Activated CD8-positive, alpha-beta T cell treated with anti-CD3 and anti-CD28 coated beads, Interleukin-2, amount 10 ng/mL, durations not matched to agents 7 days and 5 days (primary cell): ENCODE measurements at regions of chr5 and their contacts with region 1.

Region 1: DNA sequence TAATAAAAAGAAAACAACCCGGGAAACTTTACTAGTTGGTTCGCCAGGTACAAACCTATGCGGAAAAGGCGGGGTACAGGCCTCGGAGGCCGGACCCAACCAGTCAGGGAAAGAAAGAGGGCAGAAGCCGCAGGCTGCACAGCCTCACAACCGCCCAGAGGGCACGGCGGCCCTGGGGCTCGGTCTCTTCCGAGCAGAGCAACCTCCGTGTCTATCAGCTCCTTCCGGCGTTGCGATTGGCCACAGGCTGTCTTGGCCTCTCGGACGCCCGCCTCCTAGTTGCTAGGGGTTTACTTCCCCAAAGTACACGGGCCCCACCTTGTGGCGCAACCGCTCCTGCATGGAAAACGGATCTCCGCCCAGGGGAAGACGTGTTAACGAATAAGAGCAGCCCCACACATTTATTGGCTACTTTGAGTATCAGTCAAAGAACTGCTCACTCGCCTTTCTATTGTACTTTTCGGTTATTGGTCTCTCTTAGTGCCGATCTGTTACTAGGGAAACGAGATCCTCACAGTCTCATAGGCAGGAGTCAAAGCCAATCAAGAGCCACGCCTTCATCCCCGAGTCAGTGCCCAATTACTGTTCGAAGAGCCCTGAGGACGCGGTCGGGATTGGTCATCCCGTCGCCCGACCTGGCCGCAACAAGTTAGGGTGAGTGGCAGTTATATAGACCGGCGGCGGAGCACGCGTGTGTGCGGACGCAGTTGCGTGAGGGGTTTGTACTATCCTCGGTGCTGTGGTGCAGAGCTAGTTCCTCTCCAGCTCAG is at the start of gene G3BP1:
- DNase-seq: peak; percentile 100
- ATAC-seq: peak; percentile 84
- H3K4me3 Mint-ChIP-seq: peak within 1 kb of the TSS; percentile 87
- H3K27ac Mint-ChIP-seq: peak within 1 kb of the TSS; percentile 81
- H3K4me1 Mint-ChIP-seq: peaks cover 33% of the 10 kb centered on the region
- H3K27me3 Mint-ChIP-seq: no peaks in the 10 kb centered on the region
- total RNA-seq, gene G3BP1: 193 to 213 TPM

Region 2: DNA sequence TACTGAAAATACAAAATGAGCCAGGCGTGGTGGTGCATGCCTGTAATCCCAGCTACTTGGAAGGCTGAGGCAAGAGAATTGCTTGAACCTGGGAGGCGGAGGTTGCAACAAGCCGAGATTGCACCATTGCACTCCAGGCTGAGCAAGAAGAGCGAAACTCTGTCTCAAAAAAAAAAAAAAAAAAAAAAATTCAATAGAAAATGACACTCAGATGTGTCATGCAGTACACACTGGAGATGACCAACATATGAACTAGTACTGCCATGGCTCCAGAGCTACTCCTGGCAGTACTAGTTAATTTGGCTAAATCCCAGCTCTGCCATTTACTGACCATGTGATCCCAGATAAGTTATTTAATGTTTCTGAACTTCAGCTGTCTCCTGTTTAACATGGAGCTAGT is 20.4 kb before region 1 on chr5:
- CTCF ChIA-PET with region 1: interaction called, 53 read pairs
- POLR2A ChIA-PET with region 1: interaction called, 100 read pairs
- DNase-seq: no peak
- ATAC-seq: no peak
- H3K4me3 Mint-ChIP-seq: no peak overlapping the region
- H3K27ac Mint-ChIP-seq: no peak overlapping the region
- H3K4me1 Mint-ChIP-seq: peaks cover 37% of the 10 kb centered on the region
- H3K27me3 Mint-ChIP-seq: no peaks in the 10 kb centered on the region

Region 3: DNA sequence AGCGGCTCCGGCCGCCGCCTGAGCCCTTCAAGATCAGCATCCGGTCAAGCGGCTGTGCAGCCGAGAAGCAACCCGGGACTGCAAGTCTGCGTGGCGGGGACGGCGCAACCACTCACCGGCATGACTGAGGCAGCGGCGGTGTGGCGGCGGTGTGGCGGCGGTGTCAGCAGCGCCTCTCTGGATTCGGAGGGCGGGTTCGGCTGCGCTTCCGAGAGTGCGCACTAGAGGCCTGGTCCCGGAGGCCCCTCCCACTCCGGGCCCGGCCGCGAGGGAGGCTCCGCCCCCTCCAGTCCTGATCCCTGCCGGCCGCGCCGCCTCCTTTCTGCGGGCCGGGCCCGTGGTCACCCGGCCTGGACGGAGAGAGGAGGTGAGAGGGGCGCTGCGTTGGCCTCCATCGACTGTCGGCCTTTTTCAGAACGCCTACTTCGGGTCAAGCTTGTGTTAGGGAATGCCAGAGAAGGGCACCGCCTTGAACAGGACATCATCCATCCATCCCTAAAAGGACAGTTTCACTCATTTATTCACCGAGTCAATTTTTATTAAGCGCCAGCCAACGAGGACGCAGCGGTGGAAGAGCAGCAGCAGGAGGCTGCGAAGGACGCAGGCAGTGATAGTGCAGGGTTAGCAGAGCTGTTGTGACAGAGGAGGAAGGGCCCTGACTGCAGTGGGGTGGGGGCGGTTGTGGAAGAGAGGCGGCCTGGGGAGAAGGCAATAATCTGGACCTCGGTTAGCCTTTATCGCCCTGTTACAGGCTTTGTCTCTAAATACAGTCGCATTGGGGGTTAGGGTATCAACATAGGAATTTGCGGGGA is 12.8 kb before region 1 on chr5 and contains the start of gene ATOX1:
- CTCF ChIA-PET with region 1: interaction called, 53 read pairs
- POLR2A ChIA-PET with region 1: interaction called, 100 read pairs
- DNase-seq: peak; percentile 91
- ATAC-seq: peak; percentile 99
- H3K4me3 Mint-ChIP-seq: peak within 1 kb of the TSS; percentile 89
- H3K27ac Mint-ChIP-seq: peak within 1 kb of the TSS; percentile 85
- H3K4me1 Mint-ChIP-seq: peaks cover 34% of the 10 kb centered on the region
- H3K27me3 Mint-ChIP-seq: no peaks in the 10 kb centered on the region
- total RNA-seq, gene ATOX1: 45.2 to 46.6 TPM